MCF 10A (cell line): ENCODE measurements at regions of chr17 and their contacts with region 1.

Region 1: DNA sequence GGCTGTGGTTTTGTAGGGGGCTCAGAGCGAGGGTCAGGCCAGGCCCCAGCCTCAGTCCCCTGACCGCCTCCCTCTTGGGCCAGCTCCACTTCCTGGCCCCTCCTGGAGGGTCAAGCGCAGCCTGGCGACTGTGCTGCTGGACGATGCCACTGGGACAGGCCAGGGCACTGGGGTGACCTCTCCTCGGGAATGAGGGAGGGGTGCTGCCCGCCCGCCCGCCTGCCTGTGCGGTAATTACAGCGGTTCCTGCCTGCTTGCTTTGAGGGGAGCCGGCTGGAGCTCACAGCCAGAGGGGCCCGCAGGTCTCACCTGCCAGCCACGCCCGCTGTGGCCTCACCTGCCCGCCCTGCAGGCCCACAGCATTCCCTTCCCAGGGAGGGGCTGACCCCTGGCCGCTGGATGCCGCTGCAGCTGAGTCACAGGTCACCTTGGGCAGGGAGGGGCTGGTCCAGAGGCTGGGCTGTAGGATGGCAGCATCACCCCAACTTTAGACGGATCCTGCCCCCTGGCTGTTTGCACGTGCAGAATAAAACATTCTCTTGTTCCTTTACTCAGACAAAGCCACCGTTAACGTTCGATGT is 76.7 kb upstream of the CBX4 start:
- DNase-seq: peak; percentile 83
- H3K4me3 Mint-ChIP-seq: no peak overlapping the region
- H3K27ac Mint-ChIP-seq: no peak overlapping the region
- H3K4me1 Mint-ChIP-seq: peaks cover 19% of the 10 kb centered on the region
- H3K27me3 Mint-ChIP-seq: no peaks in the 10 kb centered on the region
- CTCF ChIP-seq: peak; percentile 63

Region 2: GRCh38 chr17:79741751-79742588 is 174.0 kb before region 1 on chr17:
- CTCF ChIA-PET with region 1: interaction called, 18 read pairs
- POLR2A ChIA-PET with region 1: interaction called, 3 read pairs
- intact Hi-C with region 1: loop called (anchors 1 kb)
- DNase-seq: peak; percentile 57
- H3K4me3 Mint-ChIP-seq: no peak overlapping the region
- H3K27ac Mint-ChIP-seq: no peak overlapping the region
- H3K4me1 Mint-ChIP-seq: peaks cover 10% of the 10 kb centered on the region
- H3K27me3 Mint-ChIP-seq: peaks cover 26% of the 10 kb centered on the region
- CTCF ChIP-seq: peak; percentile 95

Region 3: GRCh38 chr17:79749156-79749815 is 166.7 kb before region 1 on chr17:
- CTCF ChIA-PET with region 1: interaction called, 8 read pairs
- POLR2A ChIA-PET with region 1: interaction called, 3 read pairs
- intact Hi-C with region 1: loop called (anchors 1 kb)
- DNase-seq: peak; percentile 57
- H3K4me3 Mint-ChIP-seq: no peak overlapping the region
- H3K27ac Mint-ChIP-seq: no peak overlapping the region
- H3K4me1 Mint-ChIP-seq: no peaks in the 10 kb centered on the region
- H3K27me3 Mint-ChIP-seq: no peaks in the 10 kb centered on the region
- CTCF ChIP-seq: no peak

Region 4: DNA sequence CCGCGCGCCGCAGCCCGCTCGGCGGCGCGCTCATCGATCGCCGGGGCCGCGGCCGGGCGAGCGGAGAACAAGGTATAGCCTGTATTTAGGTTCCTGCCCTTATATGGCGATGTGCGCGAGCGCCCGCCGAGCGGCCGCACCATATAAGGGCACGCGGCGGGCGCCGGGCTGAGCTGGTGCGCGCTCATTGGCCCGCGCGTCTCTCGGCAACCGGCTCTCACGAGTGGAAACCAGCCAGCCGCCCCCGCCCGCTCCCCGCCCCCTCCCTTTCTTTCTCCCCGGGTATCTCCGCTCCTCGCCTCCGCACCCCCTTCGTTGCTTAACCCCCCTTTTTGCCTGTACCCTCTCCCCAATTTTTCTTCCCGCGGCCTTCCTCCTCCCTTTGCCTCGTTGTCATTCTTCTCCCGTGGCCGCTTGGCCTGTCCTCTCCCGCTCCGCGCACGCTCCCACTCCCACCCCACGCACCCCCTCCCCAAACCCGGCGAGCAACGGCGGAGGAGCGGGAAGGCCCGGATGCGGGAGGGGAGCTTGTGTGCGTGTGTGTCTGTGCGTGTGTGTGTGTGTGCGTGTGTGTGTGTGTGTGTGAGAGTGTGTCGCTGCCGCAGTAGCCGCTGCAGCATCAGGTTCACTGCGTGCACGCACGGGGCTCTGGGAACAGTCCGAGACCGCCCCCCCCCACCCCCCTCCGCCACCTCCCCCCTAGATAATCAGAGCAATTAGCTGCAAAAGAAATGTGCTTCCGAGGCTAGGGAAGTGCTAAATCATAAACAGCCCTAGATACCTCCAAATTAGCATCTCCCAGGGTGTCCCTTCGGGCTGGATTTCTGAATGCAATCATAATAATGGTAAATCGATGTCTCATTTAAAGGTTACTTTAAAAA is 105.6 kb before region 1 on chr17:
- CTCF ChIA-PET with region 1: interaction called, 63 read pairs
- POLR2A ChIA-PET with region 1: interaction called, 7 read pairs
- intact Hi-C with region 1: loop called (anchors 1 kb)
- DNase-seq: peak; percentile 84
- H3K4me3 Mint-ChIP-seq: peak overlapping the region; percentile 33
- H3K27ac Mint-ChIP-seq: no peak overlapping the region
- H3K4me1 Mint-ChIP-seq: peaks cover 12% of the 10 kb centered on the region
- H3K27me3 Mint-ChIP-seq: peaks cover 46% of the 10 kb centered on the region
- CTCF ChIP-seq: no peak

Region 5: DNA sequence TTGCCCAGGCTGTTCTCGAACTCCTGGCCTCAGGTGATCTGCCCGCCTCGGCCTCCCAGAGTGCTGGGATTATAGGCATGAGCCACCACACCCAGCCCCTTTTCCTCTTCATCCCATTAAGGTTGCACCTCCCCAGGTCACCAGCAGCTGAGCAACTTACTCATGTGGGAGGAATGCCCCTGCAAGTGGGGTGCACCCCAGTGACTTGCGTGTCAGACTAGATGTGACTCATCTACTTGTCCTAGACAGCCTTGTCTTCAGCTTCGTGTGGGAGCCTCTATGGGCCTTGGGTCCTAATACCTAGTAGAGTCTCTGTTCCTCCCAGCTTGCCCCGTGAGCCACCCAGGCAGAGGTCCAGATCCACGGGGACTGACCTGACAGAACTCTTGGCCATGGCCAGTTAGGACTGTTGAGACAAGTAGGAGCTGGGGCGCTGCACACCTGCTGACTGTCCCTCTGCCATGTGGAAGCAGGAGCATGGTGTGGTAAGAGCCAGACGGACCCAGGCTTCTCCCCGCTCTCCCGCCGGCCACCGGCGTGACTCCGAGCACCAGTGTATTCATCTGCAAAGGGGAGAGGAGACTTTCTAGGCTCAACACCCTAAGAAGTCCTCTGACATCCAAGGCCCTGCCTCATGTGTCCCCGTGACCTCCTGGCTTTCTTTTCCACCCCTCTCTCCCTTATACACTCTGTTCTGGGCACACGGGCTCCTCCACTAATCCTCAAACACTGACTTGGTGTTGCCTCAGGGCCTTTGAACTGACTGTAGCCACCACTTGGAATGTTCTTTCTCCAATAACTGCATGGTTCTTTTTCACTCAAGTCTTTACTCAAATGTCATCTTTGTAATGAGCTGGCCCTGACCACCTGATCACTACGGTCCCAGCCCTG is 65.1 kb before region 1 on chr17:
- CTCF ChIA-PET with region 1: interaction called, 5 read pairs
- POLR2A ChIA-PET with region 1: interaction called, 19 read pairs
- intact Hi-C with region 1: loop called (anchors 5 kb)
- DNase-seq: peak; percentile 85
- H3K4me3 Mint-ChIP-seq: peak overlapping the region; percentile 22
- H3K27ac Mint-ChIP-seq: peak overlapping the region; percentile 80
- H3K4me1 Mint-ChIP-seq: peaks cover 18% of the 10 kb centered on the region
- H3K27me3 Mint-ChIP-seq: no peaks in the 10 kb centered on the region
- CTCF ChIP-seq: no peak